ENCODE measurements at regions of chr5 and their contacts with region 1.

Region 1: DNA sequence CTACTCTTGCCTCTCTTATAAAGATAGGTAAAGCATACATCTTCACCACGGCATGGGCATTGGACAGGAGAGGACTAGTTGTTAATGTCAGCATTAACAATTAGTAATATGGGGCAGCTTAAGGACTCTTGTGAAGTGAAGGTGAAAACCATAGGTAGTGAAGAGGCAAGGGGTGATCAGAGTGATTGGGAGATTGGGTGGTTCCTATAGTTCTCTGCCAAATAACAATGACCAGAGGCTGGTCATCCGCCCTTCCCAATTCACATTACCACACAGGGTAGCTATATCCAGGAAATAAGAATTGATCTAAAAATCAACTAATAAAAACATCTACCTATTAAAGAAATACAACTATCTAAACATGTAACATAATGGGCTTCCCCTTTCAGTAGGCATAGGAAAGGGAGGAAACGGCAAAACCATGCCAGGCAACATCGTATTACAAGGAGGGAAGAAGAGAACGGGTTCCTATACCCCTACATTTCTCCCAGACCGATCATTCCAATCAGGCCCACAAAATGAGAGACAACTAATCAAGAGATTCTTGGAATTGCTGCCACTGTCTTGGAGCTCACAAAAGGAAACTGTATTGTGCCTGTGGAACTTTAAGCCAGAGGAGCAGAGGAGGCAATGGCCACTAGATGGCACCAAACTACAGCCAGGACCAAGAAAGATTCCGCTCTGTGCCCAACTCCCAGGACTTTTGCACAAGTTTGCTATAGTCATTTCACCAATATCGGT is 121.6 kb downstream of the FBXL17 start:
- DNase-seq: peak; percentile 32
- H3K4me3 Mint-ChIP-seq: no peak overlapping the region
- H3K27ac Mint-ChIP-seq: no peak overlapping the region
- H3K4me1 Mint-ChIP-seq: peaks cover 5% of the 10 kb centered on the region
- H3K27me3 Mint-ChIP-seq: no peaks in the 10 kb centered on the region

Region 2: DNA sequence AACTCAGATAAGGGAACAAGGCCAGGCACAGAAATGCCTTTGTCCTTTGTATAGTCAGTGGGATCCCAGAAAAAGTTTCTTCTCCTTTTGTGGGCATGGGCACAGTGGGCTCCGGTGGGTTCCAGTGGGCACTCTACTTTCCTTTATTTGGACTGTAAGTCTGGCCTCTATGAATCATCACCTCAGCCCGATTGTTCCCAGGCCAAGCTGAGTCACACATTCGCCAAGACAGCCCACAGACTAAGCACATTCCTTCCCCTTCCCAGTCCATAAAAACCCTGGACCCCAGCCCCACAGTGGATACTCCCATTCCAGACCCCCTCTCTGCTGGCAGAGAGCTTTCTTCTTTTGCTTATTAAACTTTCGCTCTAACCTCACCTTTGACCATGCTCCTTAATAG is 43.4 kb before region 1 on chr5:
- intact Hi-C with region 1: no loop called
- DNase-seq: no peak
- H3K4me3 Mint-ChIP-seq: no peak overlapping the region
- H3K27ac Mint-ChIP-seq: no peak overlapping the region
- H3K4me1 Mint-ChIP-seq: no peaks in the 10 kb centered on the region
- H3K27me3 Mint-ChIP-seq: no peaks in the 10 kb centered on the region

Region 3: GRCh38 chr5:108280248-108280647 is 20.0 kb after region 1 on chr5:
- intact Hi-C with region 1: no loop called
- DNase-seq: no peak
- H3K4me3 Mint-ChIP-seq: no peak overlapping the region
- H3K27ac Mint-ChIP-seq: no peak overlapping the region
- H3K4me1 Mint-ChIP-seq: peaks cover 4% of the 10 kb centered on the region
- H3K27me3 Mint-ChIP-seq: no peaks in the 10 kb centered on the region

Region 4: GRCh38 chr5:108345541-108346171 is 85.4 kb after region 1 on chr5:
- intact Hi-C with region 1: loop called (anchors 1 kb)
- DNase-seq: no peak
- H3K4me3 Mint-ChIP-seq: no peak overlapping the region
- H3K27ac Mint-ChIP-seq: no peak overlapping the region
- H3K4me1 Mint-ChIP-seq: peaks cover 1% of the 10 kb centered on the region
- H3K27me3 Mint-ChIP-seq: no peaks in the 10 kb centered on the region

Region 5: DNA sequence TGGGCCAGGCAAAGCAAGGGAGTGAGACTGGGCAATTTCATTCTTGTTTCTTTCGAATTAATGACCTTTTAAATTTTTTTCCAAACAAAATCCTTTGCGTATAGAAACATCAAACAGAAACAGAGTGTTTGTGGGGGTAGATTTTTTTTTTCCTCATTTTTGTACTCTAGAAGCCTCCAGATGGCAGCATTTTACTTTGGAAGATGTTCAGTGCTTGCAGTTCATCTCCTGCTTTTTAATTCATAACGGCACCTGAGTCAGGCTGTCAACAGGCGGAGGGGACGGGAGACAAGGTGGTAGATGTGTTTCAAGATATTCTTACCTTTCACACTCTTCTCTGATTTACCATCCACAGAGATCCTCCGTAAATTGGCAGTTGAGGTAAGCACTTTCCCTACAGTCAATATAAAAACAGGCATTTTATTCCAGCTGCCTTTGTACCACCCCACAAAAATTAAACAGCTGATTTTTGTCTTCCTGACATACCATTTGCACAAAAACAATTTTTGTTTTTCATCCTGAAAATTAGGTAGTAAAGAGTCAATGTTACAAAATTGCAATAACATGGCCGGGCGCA is 221.2 kb after region 1 on chr5:
- intact Hi-C with region 1: no loop called
- DNase-seq: no peak
- H3K4me3 Mint-ChIP-seq: no peak overlapping the region
- H3K27ac Mint-ChIP-seq: no peak overlapping the region
- H3K4me1 Mint-ChIP-seq: no peaks in the 10 kb centered on the region
- H3K27me3 Mint-ChIP-seq: peaks cover 2% of the 10 kb centered on the region